SK-N-SH (cell line): ENCODE measurements at regions of chr2 and their contacts with region 1.

Region 1: DNA sequence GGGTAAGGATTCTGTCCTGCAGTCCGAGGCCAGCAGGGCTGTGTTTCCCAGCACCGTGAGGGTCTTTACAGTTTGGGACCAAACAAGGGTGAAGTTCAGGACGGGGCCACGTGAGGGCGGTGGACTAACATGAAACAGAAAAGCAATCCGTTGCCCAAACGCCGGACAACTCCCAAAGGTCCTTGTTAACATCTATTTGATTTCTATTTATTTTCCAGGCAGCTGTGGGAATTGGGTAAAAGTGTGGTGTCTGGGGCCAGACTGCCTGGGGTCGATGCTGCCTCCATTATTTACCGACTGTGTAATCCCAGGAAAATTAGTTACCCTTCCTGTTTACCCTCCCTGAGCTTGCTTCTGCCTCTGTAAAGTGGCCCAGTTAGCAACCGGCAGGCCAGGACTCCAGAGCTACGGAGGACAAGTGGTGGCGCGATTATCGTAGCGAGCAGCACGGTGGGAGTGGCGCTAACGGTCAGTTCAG is 66.3 kb upstream of the TCF7L1 start:
- DNase-seq: peak; percentile 75
- H3K4me3 ChIP-seq: peak overlapping the region; percentile 7 to 24; a peak in 3 of 4 replicates
- H3K27ac ChIP-seq: no peak overlapping the region
- H3K4me1 ChIP-seq: peaks cover 0 to 16% of the 10 kb centered on the region in 2 experiments; a peak in 1 of 4 replicates
- H3K27me3 ChIP-seq: no peaks in the 10 kb centered on the region
- CTCF ChIP-seq: peak; percentile 91
- EP300 ChIP-seq: peak in 1 of 2 experiments; percentile 25; a peak in 1 of 4 replicates
- RAD21 ChIP-seq: peak; percentile 93

Region 2: DNA sequence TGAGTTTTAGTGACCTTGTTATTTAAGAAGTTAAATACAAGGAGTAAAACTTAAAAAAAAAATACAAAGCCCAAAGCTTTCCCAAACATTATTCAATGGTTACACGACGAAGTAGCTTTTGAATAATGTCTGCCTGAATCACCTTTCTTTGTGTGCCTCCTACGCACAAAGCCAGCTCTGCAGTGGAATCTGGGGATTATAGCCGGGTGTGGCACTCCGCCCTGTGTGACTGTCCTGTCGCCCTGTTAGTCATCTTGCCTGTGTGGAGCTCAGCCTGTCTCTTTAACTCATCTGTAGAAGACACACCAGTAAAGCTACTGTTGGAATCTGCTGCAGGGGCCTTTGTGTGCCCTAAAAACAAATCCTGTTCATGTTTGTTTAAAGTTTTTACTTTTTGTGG is 13.1 kb before region 1 on chr2:
- CTCF ChIA-PET with region 1: interaction called, 33 read pairs
- POLR2A ChIA-PET with region 1: interaction called, 3 read pairs
- DNase-seq: no peak
- H3K4me3 ChIP-seq: no peak overlapping the region
- H3K27ac ChIP-seq: no peak overlapping the region
- H3K4me1 ChIP-seq: peaks cover 0 to 19% of the 10 kb centered on the region in 2 experiments; a peak in 2 of 4 replicates
- H3K27me3 ChIP-seq: no peaks in the 10 kb centered on the region
- CTCF ChIP-seq: no peak
- EP300 ChIP-seq: no peak
- RAD21 ChIP-seq: no peak

Region 3: GRCh38 chr2:85119900-85120299 is 53.0 kb after region 1 on chr2:
- CTCF ChIA-PET with region 1: interaction called, 12 read pairs
- POLR2A ChIA-PET with region 1: no interaction called
- DNase-seq: no peak
- H3K4me3 ChIP-seq: no peak overlapping the region
- H3K27ac ChIP-seq: no peak overlapping the region
- H3K4me1 ChIP-seq: no peaks in the 10 kb centered on the region
- H3K27me3 ChIP-seq: no peaks in the 10 kb centered on the region
- CTCF ChIP-seq: no peak
- EP300 ChIP-seq: no peak
- RAD21 ChIP-seq: no peak

Region 4: GRCh38 chr2:85255813-85256594 is 189.1 kb after region 1 on chr2:
- CTCF ChIA-PET with region 1: interaction called, 17 read pairs
- POLR2A ChIA-PET with region 1: no interaction called
- DNase-seq: peak; percentile 50
- H3K4me3 ChIP-seq: no peak overlapping the region
- H3K27ac ChIP-seq: peak overlapping the region; percentile 29 to 95; a peak in 3 of 4 replicates
- H3K4me1 ChIP-seq: peaks cover 33 to 62% of the 10 kb centered on the region in 2 experiments
- H3K27me3 ChIP-seq: no peaks in the 10 kb centered on the region
- CTCF ChIP-seq: no peak
- EP300 ChIP-seq: no peak
- RAD21 ChIP-seq: no peak

Region 5: DNA sequence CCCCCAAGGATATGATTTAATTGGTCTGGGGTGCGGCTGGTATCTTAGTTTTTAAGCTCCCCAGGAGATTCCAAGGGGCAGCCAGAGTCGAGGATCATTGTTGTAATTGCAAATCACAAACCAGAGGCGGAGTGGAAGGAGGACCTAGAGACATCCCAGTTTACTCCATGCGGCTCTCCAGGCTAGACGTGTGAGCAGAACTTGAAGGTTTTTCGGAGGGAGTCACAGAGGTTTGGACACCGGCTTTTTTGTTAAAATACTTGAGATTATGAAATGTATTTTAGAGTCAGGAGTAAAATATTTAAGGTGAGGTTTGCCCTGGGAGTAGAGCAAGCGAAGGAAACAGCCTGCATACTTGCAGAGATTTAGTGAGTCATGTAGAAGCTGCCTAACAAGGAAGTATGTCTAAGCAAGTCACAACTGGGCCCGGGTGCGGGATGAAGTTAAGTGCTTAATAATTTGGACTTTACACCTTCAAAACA is 221.4 kb after region 1 on chr2:
- CTCF ChIA-PET with region 1: interaction called, 205 read pairs
- POLR2A ChIA-PET with region 1: interaction called, 3 read pairs
- DNase-seq: no peak
- H3K4me3 ChIP-seq: no peak overlapping the region
- H3K27ac ChIP-seq: no peak overlapping the region
- H3K4me1 ChIP-seq: peaks cover 3 to 9% of the 10 kb centered on the region in 2 experiments; a peak in 2 of 4 replicates
- H3K27me3 ChIP-seq: no peaks in the 10 kb centered on the region
- CTCF ChIP-seq: no peak
- EP300 ChIP-seq: no peak
- RAD21 ChIP-seq: no peak